ENCODE measurements at regions of chr1 and their contacts with region 1.

Region 1: DNA sequence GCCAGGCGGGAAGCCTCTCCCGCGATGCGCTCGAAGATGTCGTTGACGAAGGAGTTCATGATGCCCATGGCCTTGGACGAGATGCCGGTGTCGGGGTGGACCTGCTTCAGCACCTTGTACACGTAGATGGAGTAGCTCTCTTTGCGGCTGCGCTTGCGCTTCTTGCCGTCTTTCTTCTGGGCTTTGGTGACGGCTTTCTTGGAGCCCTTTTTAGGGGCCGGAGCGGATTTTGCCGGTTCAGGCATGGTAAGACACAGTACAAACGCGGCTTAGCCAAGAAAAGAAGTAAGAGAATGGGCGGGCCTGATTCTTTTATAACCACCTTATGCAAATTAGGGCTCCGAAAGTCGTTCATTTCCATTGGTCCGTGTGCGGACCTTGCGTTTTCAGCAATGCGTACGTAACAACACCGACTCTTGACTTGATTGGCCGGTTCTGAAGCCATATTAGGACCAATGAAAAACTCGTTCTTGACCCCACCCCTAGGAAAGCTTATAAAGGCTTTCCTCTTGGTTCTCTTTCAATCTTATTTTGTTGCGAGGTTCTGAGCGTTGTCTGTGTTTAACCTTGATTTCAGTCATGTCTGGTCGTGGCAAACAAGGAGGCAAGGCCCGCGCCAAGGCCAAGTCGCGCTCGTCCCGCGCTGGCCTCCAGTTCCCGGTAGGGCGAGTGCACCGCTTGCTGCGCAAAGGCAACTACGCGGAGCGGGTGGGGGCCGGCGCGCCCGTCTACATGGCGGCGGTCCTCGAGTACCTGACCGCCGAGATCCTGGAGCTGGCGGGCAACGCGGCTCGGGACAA is 12.8 kb upstream of the BOLA1 start:
- DNase-seq: peak; percentile 71 to 98 (median 95)
- ATAC-seq: peak; percentile 79
- H3K4me3 ChIP-seq: peak overlapping the region; percentile 97
- H3K4me3 Mint-ChIP-seq: no peak overlapping the region
- H3K27ac ChIP-seq: peak overlapping the region; percentile 93
- H3K27ac Mint-ChIP-seq: no peak overlapping the region
- H3K4me1 ChIP-seq: peaks cover 17 to 28% of the 10 kb centered on the region in 2 donors
- H3K4me1 Mint-ChIP-seq: peaks cover 10 to 15% (median 12%) of the 10 kb centered on the region in 7 donors
- H3K27me3 ChIP-seq: no peaks in the 10 kb centered on the region
- H3K27me3 Mint-ChIP-seq: no peaks in the 10 kb centered on the region

Region 2: GRCh38 chr1:149844101-149844500 is 42.5 kb before region 1 on chr1:
- CTCF ChIA-PET with region 1: interaction called, 13 read pairs
- POLR2A ChIA-PET with region 1: interaction called, 547 read pairs
- intact Hi-C with region 1: no loop called
- DNase-seq: peak in 5 of 9 donors; percentile 0 to 35 (median 5)
- ATAC-seq: no peak
- H3K4me3 ChIP-seq: peak overlapping the region; percentile 92
- H3K4me3 Mint-ChIP-seq: peak overlapping the region; percentile 78 to 97 (median 90)
- H3K27ac ChIP-seq: peak overlapping the region; percentile 78
- H3K27ac Mint-ChIP-seq: peak overlapping the region; percentile 75 to 95 (median 89)
- H3K4me1 ChIP-seq: peaks cover 29 to 42% of the 10 kb centered on the region in 2 donors
- H3K4me1 Mint-ChIP-seq: peaks cover 31 to 54% (median 49%) of the 10 kb centered on the region in 7 donors
- H3K27me3 ChIP-seq: no peaks in the 10 kb centered on the region
- H3K27me3 Mint-ChIP-seq: no peaks in the 10 kb centered on the region

Region 3: DNA sequence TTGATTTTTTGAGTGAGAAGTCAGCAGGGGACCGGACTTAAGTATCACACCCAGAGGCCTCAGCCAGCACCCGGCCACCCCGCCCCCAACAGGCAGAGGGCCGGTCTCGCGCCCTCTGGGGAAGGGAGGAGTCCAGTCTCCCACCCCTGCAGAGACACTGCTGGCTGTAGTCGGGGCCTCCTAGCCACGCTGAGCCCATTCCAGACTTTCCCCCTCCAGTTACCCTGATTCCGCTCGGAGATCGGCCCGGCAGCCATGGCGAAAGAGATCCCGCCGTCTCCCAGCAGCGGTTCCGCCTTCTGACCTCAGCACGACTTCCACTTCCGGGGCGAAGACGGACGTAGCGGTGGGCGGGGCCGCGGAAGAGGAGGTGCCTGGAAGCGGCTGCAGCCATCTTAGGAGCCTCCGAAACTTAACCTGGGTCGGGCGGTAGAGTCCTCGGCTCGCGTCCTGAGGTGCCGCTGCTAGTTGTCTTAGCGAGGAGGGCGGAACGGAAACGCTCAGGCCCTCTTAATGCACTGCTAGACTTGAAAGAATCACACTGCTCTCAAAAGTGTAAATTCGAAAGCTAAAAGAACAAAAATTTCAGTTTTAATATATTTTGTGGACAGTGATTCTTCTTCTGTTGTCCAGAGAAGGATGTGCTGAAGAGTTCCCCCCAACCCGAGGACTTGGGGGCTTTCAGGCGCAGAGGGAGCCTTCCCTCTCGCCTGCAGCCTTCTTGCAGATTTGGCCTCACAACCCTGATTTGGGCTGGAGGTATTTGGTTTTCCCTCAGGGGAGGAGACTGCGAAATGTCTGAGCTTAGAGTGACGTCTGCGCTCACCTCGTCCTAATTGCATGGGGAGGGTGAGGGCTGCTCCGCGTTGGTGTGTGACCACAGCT is 41.1 kb after region 1 on chr1 and contains the start of gene SF3B4:
- CTCF ChIA-PET with region 1: no interaction called
- POLR2A ChIA-PET with region 1: interaction called, 174 read pairs
- intact Hi-C with region 1: loop called (anchors 1 kb)
- DNase-seq: peak; percentile 89 to 96 (median 95)
- ATAC-seq: peak; percentile 98
- H3K4me3 ChIP-seq: peak within 1 kb of the TSS; percentile 82
- H3K4me3 Mint-ChIP-seq: peak within 1 kb of the TSS; percentile 91 to 99 (median 96)
- H3K27ac ChIP-seq: peak within 1 kb of the TSS; percentile 94
- H3K27ac Mint-ChIP-seq: peak within 1 kb of the TSS; percentile 96 to 99 (median 98)
- H3K4me1 ChIP-seq: peaks cover 19 to 30% of the 10 kb centered on the region in 2 donors
- H3K4me1 Mint-ChIP-seq: peaks cover 44 to 67% (median 49%) of the 10 kb centered on the region in 7 donors
- H3K27me3 ChIP-seq: no peaks in the 10 kb centered on the region
- H3K27me3 Mint-ChIP-seq: peaks cover 0 to 13% (median 5%) of the 10 kb centered on the region in 5 donors
- total RNA-seq, gene SF3B4: 39.0 to 103 (median 43.4) TPM

Region 4: DNA sequence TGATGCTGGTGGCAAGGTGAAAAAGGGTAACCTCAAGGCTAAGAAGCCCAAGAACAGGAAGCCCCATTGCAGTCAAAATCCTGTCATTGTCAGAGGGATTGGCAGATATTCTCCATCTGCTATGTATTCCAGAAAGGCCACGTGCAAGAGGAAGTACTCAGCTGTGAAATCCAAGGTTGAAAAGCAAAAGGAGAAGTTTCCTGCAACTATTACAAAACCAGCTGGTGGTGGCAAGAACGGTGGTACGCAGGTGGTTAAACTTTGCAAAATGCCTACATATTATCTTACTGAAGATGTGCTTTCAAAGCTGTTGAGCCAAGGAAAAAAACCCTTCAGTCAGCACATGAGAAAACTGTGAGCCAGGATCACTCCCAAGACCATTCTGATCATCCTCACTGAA is 167.3 kb after region 1 on chr1:
- CTCF ChIA-PET with region 1: no interaction called
- POLR2A ChIA-PET with region 1: interaction called, 27 read pairs
- intact Hi-C with region 1: loop called (anchors 1 kb)
- DNase-seq: no peak
- ATAC-seq: no peak
- H3K4me3 ChIP-seq: no peak overlapping the region
- H3K4me3 Mint-ChIP-seq: no peak overlapping the region
- H3K27ac ChIP-seq: no peak overlapping the region
- H3K27ac Mint-ChIP-seq: no peak overlapping the region
- H3K4me1 ChIP-seq: peaks cover 0 to 6% of the 10 kb centered on the region in 2 donors
- H3K4me1 Mint-ChIP-seq: peaks cover 0 to 5% (median 2%) of the 10 kb centered on the region in 7 donors
- H3K27me3 ChIP-seq: no peaks in the 10 kb centered on the region
- H3K27me3 Mint-ChIP-seq: peaks cover 0 to 34% (median 0%) of the 10 kb centered on the region in 5 donors

Region 5: GRCh38 chr1:150149271-150150132 is 262.9 kb after region 1 on chr1 and contains the start of gene PLEKHO1:
- CTCF ChIA-PET with region 1: no interaction called
- POLR2A ChIA-PET with region 1: interaction called, 18 read pairs
- intact Hi-C with region 1: no loop called
- DNase-seq: peak; percentile 53 to 84 (median 65)
- ATAC-seq: peak; percentile 86
- H3K4me3 ChIP-seq: peak within 1 kb of the TSS; percentile 89
- H3K4me3 Mint-ChIP-seq: peak within 1 kb of the TSS; percentile 89 to 99 (median 96)
- H3K27ac ChIP-seq: peak within 1 kb of the TSS; percentile 77
- H3K27ac Mint-ChIP-seq: peak within 1 kb of the TSS; percentile 87 to 99 (median 97)
- H3K4me1 ChIP-seq: peaks cover 21 to 38% of the 10 kb centered on the region in 2 donors
- H3K4me1 Mint-ChIP-seq: peaks cover 42 to 79% (median 74%) of the 10 kb centered on the region in 7 donors
- H3K27me3 ChIP-seq: no peaks in the 10 kb centered on the region
- H3K27me3 Mint-ChIP-seq: peaks cover 0 to 26% (median 0%) of the 10 kb centered on the region in 5 donors
- total RNA-seq, gene PLEKHO1: 64.9 to 111 (median 94.1) TPM

Region 6: DNA sequence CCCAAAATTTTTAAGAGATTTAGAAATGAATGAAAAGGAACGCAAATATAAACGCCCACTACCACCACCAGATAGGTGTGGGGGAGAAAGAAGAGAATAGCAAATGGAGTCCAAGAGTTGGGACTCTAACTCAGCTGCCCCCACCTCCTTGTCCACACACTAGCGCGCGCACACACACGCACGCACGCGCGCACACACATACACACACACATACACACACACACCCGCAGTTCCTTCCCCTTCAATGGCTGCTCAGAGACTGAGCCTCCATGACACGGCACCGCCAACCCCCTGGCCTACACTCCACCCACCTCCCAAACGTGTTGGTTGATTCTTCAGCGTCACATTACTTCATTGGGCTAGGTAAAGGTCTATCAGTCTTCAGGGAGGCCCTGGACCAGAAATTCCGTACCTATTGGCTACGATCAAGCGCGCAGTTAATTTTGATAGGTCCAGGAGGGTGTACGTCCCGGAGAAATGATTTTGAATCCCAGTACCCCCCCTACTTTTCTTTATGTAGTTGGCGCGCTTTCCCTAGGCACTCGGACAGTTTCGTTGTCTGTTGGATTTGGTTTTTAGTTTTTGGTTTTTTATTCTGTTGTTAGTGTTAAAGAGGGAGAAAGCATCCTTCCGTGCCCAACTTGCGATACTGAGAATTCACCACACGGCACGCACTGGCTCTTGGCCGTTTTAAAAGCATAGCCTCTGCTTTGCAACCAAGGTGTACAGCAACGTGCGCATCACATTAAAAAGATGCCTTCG is 349.4 kb after region 1 on chr1 and contains the start of gene ANP32E:
- CTCF ChIA-PET with region 1: no interaction called
- POLR2A ChIA-PET with region 1: interaction called, 28 read pairs
- intact Hi-C with region 1: loop called in 1 of 2 experiments (anchors 1 kb)
- DNase-seq: peak; percentile 75 to 99 (median 98)
- ATAC-seq: peak; percentile 94
- H3K4me3 ChIP-seq: peak within 1 kb of the TSS; percentile 98
- H3K4me3 Mint-ChIP-seq: peak within 1 kb of the TSS in 3 of 10 donors; percentile 10 to 93 (median 60)
- H3K27ac ChIP-seq: peak within 1 kb of the TSS; percentile 97
- H3K27ac Mint-ChIP-seq: peak within 1 kb of the TSS in 4 of 9 donors; percentile 97 to 99 (median 98)
- H3K4me1 ChIP-seq: peaks cover 0 to 7% of the 10 kb centered on the region in 2 donors
- H3K4me1 Mint-ChIP-seq: peaks cover 11 to 22% (median 18%) of the 10 kb centered on the region in 7 donors
- H3K27me3 ChIP-seq: no peaks in the 10 kb centered on the region
- H3K27me3 Mint-ChIP-seq: peaks cover 0 to 4% (median 0%) of the 10 kb centered on the region in 5 donors
- total RNA-seq, gene ANP32E: 35.6 to 156 (median 44.8) TPM